ENCODE measurements at regions of chr17 and their contacts with region 1.

Region 1: GRCh38 chr17:17681187-17681848 is at the start of gene RAI1:
- DNase-seq: peak; percentile 76
- H3K4me3 Mint-ChIP-seq: peak within 1 kb of the TSS; percentile 80
- H3K27ac Mint-ChIP-seq: peak within 1 kb of the TSS; percentile 46
- H3K4me1 Mint-ChIP-seq: peaks cover 38% of the 10 kb centered on the region
- H3K27me3 Mint-ChIP-seq: no peaks in the 10 kb centered on the region
- CTCF ChIP-seq: peak; percentile 82
- total RNA-seq, gene RAI1: 30.4 and 34.6 TPM in 2 replicates

Region 2: DNA sequence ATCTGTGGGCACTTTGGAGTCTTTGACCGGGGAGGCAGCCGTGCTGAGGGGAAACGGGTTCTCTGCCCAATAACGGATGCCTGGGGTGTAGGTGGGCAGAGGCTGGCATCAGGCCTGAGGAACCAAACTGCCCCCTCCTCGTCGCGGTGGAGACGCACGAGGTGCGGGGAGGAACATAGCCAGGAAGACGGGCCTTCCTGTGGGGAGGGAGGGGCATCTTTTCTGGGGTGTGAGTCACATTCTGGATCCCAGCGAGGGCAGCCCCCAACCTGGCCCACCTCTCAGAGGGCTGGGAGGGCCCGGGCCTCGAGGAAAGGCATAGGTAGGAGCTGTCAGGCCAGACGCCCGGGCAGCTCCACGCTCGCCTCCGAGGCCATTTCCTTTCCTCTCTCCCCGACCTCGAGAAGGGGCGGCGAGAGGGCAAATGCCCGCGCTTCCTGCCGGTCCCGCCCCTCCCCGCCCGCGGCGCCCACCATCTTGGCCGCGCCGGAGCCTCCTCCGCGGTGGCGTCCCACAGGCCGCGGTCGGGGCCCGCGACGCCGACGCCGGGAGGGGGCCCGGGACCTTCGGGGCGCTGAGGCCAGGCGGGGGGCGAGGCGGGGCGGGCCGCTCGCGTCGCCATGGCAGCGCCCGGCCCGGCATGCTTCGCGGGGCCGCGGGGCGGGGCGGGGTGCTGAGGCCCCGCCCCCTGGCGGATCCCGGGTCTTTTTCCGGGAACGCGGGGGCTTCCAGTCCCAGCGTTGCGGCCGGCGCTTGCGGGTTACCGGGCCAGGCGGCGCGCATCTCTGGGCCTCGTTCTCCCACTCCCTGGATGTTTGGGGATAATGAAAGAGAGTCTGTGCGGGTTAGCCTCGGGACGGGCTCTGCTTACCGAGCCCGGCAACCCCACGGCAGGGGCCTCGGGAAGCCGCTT is 13.1 kb after region 1 on chr17:
- CTCF ChIA-PET with region 1: interaction called, 10 read pairs
- POLR2A ChIA-PET with region 1: interaction called, 75 read pairs
- intact Hi-C with region 1: no loop called
- DNase-seq: peak; percentile 73
- H3K4me3 Mint-ChIP-seq: peak overlapping the region; percentile 82
- H3K27ac Mint-ChIP-seq: peak overlapping the region; percentile 97
- H3K4me1 Mint-ChIP-seq: peaks cover 55% of the 10 kb centered on the region
- H3K27me3 Mint-ChIP-seq: no peaks in the 10 kb centered on the region
- CTCF ChIP-seq: no peak

Region 3: GRCh38 chr17:17752089-17752820 is 70.9 kb after region 1 on chr17:
- CTCF ChIA-PET with region 1: no interaction called
- POLR2A ChIA-PET with region 1: no interaction called
- intact Hi-C with region 1: loop called (anchors 5 kb)
- DNase-seq: peak; percentile 95
- H3K4me3 Mint-ChIP-seq: peak overlapping the region; percentile 88
- H3K27ac Mint-ChIP-seq: peak overlapping the region; percentile 84
- H3K4me1 Mint-ChIP-seq: peaks cover 17% of the 10 kb centered on the region
- H3K27me3 Mint-ChIP-seq: no peaks in the 10 kb centered on the region
- CTCF ChIP-seq: no peak

Region 4: DNA sequence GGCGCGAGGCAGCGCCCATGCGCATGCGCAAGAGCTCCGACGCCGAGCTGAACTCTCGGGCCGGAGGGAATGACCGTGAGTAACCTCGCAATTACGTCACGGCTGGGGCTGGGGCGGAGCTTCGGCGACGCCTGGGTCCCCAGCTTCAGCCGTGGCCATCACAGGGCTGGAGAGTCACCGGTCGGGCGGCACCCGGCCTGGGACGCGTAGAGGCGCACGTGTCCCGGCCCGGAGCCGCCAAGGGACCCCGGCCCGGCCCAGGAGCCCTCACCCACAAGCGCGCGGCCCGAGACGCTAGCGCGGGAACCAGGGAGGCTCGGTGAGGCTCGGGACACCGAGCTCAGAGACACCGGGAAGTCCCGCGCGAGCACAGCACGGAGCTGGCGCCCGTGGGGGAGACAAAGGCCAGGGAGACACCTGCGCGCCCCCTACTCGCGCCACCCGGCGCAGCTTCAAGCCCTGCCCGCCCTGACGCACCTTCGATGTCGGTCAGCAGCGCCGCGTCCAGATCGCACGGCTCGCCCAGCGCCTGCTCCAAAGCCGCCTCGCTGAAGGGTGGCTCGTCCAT is 155.0 kb after region 1 on chr17:
- CTCF ChIA-PET with region 1: no interaction called
- POLR2A ChIA-PET with region 1: interaction called, 32 read pairs
- intact Hi-C with region 1: no loop called
- DNase-seq: peak; percentile 94
- H3K4me3 Mint-ChIP-seq: peak overlapping the region; percentile 73
- H3K27ac Mint-ChIP-seq: peak overlapping the region; percentile 66
- H3K4me1 Mint-ChIP-seq: peaks cover 45% of the 10 kb centered on the region
- H3K27me3 Mint-ChIP-seq: no peaks in the 10 kb centered on the region
- CTCF ChIP-seq: no peak

Region 5: GRCh38 chr17:18038861-18039534 is 357.7 kb after region 1 on chr17 and contains the starts of genes ATPAF2 and GID4:
- CTCF ChIA-PET with region 1: interaction called, 3 read pairs
- POLR2A ChIA-PET with region 1: no interaction called
- intact Hi-C with region 1: loop called (anchors 10 kb)
- DNase-seq: peak; percentile 99
- H3K4me3 Mint-ChIP-seq: peak within 1 kb of the TSS; percentile 75
- H3K27ac Mint-ChIP-seq: peak within 1 kb of the TSS; percentile 72
- H3K4me1 Mint-ChIP-seq: peaks cover 40% of the 10 kb centered on the region
- H3K27me3 Mint-ChIP-seq: no peaks in the 10 kb centered on the region
- CTCF ChIP-seq: no peak
- total RNA-seq, gene ATPAF2: 12.4 and 18.6 TPM in 2 replicates
- total RNA-seq, gene GID4: 9.8 and 11.0 TPM in 2 replicates

Measured in MCF 10A (cell line).